ENCODE measurements at regions of chr6 and their contacts with region 1.

Region 1: GRCh38 chr6:41367700-41368099 is 32.3 kb downstream of the NCR2 start:
- DNase-seq: no peak
- H3K4me3 ChIP-seq: no peak overlapping the region
- H3K27ac ChIP-seq: no peak overlapping the region
- H3K4me1 ChIP-seq: peaks cover 12 to 26% (median 16%) of the 10 kb centered on the region in 3 donors
- H3K27me3 ChIP-seq: peaks cover 2 to 99% (median 17%) of the 10 kb centered on the region in 4 donors
- CTCF ChIP-seq: peak; percentile 18 to 60 (median 35)
- POLR2A ChIP-seq: no peak

Region 2: GRCh38 chr6:41239467-41240159 is 128.1 kb before region 1 on chr6:
- intact Hi-C with region 1: no loop called
- DNase-seq: no peak
- H3K4me3 ChIP-seq: no peak overlapping the region
- H3K27ac ChIP-seq: no peak overlapping the region
- H3K4me1 ChIP-seq: no peaks in the 10 kb centered on the region
- H3K27me3 ChIP-seq: peaks cover 0 to 65% (median 5%) of the 10 kb centered on the region in 4 donors
- CTCF ChIP-seq: no peak
- POLR2A ChIP-seq: no peak

Region 3: DNA sequence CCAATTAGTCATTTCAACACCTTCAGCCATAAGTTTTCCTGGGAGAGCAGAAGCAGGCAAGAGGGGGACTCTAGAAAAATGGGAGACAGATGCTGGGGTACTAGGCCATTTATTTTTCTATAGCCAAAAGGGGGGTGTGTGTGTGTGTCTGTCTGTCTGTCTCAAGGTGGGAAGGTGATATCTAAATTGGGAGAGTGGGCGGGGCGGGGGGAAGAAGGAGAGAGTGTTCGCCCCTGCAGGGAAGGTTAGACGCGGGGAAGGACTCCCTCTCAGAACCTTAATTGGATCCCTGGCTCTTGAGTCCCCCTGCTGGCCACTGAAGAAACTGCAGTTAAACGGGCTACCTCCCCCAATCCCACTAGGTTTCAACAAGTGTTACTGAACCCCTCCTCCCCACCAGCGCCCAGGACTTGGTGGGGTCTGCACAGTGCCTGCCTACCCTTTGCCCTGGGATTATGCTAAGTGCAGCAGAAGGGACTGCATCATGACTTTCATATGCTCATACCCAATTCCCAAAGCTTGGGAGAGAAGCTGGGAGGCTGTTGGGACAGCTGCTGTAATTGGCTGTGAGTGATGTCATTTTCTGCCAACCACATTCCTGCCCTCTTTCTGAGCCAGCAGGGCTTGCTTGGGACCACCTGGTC is 224.3 kb after region 1 on chr6:
- intact Hi-C with region 1: loop called (anchors 5 kb)
- DNase-seq: no peak
- H3K4me3 ChIP-seq: no peak overlapping the region
- H3K27ac ChIP-seq: no peak overlapping the region
- H3K4me1 ChIP-seq: peaks cover 0 to under 1% (median 0%) of the 10 kb centered on the region in 3 donors
- H3K27me3 ChIP-seq: no peaks in the 10 kb centered on the region
- CTCF ChIP-seq: peak; percentile 88 to 98 (median 94)
- POLR2A ChIP-seq: no peak

Region 4: DNA sequence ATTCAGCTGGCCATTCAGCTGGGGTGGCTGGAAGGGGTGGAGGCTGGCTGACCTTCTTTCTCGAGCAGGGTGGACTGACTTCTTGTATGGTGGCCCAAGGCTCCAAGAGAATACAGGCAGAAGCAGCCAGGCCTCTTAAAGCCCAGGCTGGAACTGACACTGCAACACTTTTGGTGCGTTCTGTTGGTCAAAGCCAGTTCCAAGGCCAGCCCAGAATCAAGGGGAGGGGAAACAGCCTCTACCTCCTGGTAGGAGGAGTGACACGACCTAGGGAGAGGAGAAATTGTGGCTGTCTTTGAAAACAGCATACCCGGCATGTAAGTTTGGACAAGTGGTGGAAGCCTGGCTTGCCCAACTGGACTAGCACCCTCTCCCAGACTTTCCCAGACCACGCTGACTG is 250.4 kb after region 1 on chr6:
- intact Hi-C with region 1: no loop called
- DNase-seq: no peak
- H3K4me3 ChIP-seq: no peak overlapping the region
- H3K27ac ChIP-seq: no peak overlapping the region
- H3K4me1 ChIP-seq: peaks cover 0 to 13% (median 12%) of the 10 kb centered on the region in 3 donors
- H3K27me3 ChIP-seq: no peaks in the 10 kb centered on the region
- CTCF ChIP-seq: no peak
- POLR2A ChIP-seq: no peak

Region 5: GRCh38 chr6:41683510-41684310 is 316.0 kb after region 1 on chr6:
- intact Hi-C with region 1: loop called (anchors 5 kb)
- DNase-seq: no peak
- H3K4me3 ChIP-seq: peak overlapping the region; percentile 27 to 55 (median 46)
- H3K27ac ChIP-seq: peak overlapping the region; percentile 25 to 66 (median 52)
- H3K4me1 ChIP-seq: peaks cover 8 to 39% (median 16%) of the 10 kb centered on the region in 3 donors
- H3K27me3 ChIP-seq: peaks cover 0 to 4% (median 0%) of the 10 kb centered on the region in 4 donors
- CTCF ChIP-seq: peak; percentile 85 to 96 (median 90)
- POLR2A ChIP-seq: no peak

Measured in esophagus squamous epithelium (tissue), 5 donors.